ENCODE measurements at regions of chr20 and their contacts with region 1.

Region 1: GRCh38 chr20:25654487-25654886 is 30.7 kb upstream of the NANP start:
- DNase-seq: no peak
- H3K4me3 ChIP-seq: no peak overlapping the region
- H3K27ac ChIP-seq: no peak overlapping the region
- H3K4me1 ChIP-seq: no peaks in the 10 kb centered on the region
- H3K27me3 ChIP-seq: no peaks in the 10 kb centered on the region
- CTCF ChIP-seq: no peak
- EP300 ChIP-seq: no peak
- POLR2A ChIP-seq: no peak

Region 2: GRCh38 chr20:24060851-24061590 is 1593.5 kb before region 1 on chr20:
- in situ Hi-C with region 1: no loop called
- intact Hi-C with region 1: loop called (anchors 5 kb)
- DNase-seq: no peak
- H3K4me3 ChIP-seq: no peak overlapping the region
- H3K27ac ChIP-seq: no peak overlapping the region
- H3K4me1 ChIP-seq: no peaks in the 10 kb centered on the region
- H3K27me3 ChIP-seq: no peaks in the 10 kb centered on the region
- CTCF ChIP-seq: no peak
- EP300 ChIP-seq: no peak
- POLR2A ChIP-seq: no peak

Region 3: DNA sequence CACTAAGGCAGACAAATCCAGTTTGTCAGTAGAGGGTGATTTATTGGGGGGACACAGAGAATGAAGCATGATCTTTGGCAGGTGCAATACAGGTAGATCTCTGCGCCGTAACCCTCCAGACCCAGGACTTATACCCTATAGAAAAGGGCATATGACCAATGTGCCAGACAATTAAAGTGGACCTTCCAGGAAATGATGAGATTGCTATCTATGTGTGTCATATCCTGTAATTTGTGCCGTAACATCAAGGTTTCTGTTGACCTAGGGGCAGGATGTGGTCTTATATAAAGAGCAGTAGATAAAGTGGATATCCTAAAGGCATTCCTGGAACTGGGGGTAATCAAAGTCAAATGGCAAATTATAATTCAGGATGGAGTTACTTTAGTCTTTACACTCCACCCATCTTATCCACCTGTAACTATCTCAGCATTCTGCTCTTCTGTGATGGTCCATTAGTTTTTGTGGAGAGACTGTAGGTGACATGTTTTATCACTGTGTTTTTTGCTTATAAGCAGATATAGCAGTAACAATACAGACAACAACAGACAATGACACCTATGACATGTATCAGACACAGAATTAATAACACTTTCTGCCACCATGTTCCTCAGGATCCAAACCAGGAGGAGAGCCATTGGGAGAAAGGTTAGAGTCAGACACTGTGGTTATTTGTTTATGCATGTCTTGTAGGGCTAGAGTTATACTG is 85.3 kb after region 1 on chr20:
- in situ Hi-C with region 1: no loop called
- intact Hi-C with region 1: no loop called
- DNase-seq: no peak
- H3K4me3 ChIP-seq: no peak overlapping the region
- H3K27ac ChIP-seq: no peak overlapping the region
- H3K4me1 ChIP-seq: no peaks in the 10 kb centered on the region
- H3K27me3 ChIP-seq: no peaks in the 10 kb centered on the region
- CTCF ChIP-seq: no peak
- EP300 ChIP-seq: no peak
- POLR2A ChIP-seq: no peak

Measured in transverse colon (tissue), 4 donors.